ENCODE measurements at regions of chr4 and their contacts with region 1.

Region 1: GRCh38 chr4:71009890-71010588 is 16.6 kb downstream of the DCK start:
- DNase-seq: no peak
- ATAC-seq: peak; percentile 71
- H3K4me3 ChIP-seq: no peak overlapping the region
- H3K27ac ChIP-seq: no peak overlapping the region
- H3K4me1 ChIP-seq: peaks cover 8% of the 10 kb centered on the region
- H3K27me3 ChIP-seq: no peaks in the 10 kb centered on the region
- CTCF ChIP-seq: peak; percentile 47 to 61 (median 54); a peak in 5 of 6 replicates
- EP300 ChIP-seq: no peak
- POLR2A ChIP-seq: no peak
- RAD21 ChIP-seq: peak; percentile 62

Region 2: GRCh38 chr4:70183168-70183939 is 826.7 kb before region 1 on chr4:
- CTCF ChIA-PET with region 1: no interaction called
- POLR2A ChIA-PET with region 1: no interaction called
- RAD21 ChIA-PET with region 1: no interaction called
- SMC1A ChIA-PET with region 1: no interaction called
- in situ Hi-C with region 1: no loop called
- intact Hi-C with region 1: no loop called
- DNase-seq: no peak
- ATAC-seq: peak; percentile 93
- H3K4me3 ChIP-seq: no peak overlapping the region
- H3K27ac ChIP-seq: no peak overlapping the region
- H3K4me1 ChIP-seq: no peaks in the 10 kb centered on the region
- H3K27me3 ChIP-seq: no peaks in the 10 kb centered on the region
- CTCF ChIP-seq: peak; percentile 62 to 74 (median 73)
- EP300 ChIP-seq: no peak
- POLR2A ChIP-seq: no peak
- RAD21 ChIP-seq: peak; percentile 75

Region 3: DNA sequence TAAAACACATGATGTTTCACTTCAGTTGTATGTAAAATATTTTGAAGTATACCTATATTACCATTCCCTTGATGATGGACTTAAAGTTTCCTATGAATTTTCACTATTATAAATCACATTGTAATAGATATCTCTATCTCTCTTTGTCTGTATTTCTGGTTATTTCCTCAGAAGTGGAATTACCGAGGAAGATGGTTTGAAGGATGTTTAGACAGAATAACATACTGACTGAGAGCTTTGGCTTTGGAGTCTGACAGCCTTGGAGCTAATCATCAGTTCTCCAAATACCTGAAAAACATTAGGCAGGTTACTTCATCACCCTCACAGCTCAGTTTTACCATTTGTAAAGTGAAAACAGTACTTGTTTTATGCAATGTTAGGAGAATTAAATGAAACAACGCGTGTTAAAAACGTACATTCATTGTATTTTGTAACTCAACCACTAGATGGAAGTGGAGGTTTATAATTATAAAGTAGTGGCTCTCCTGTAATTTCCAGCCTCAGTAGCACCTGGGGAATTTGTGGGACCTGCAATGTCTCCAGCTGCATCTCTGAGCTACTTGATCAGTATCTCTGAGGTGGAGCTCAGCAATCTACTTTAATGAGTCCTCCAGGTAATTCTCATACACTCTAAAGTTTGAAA is 358.1 kb before region 1 on chr4:
- CTCF ChIA-PET with region 1: interaction called, 22 read pairs
- POLR2A ChIA-PET with region 1: no interaction called
- RAD21 ChIA-PET with region 1: interaction called, 11 read pairs
- SMC1A ChIA-PET with region 1: interaction called, 18 read pairs
- in situ Hi-C with region 1: no loop called
- intact Hi-C with region 1: loop called (anchors 2 kb)
- DNase-seq: no peak
- ATAC-seq: peak; percentile 68
- H3K4me3 ChIP-seq: no peak overlapping the region
- H3K27ac ChIP-seq: no peak overlapping the region
- H3K4me1 ChIP-seq: no peaks in the 10 kb centered on the region
- H3K27me3 ChIP-seq: no peaks in the 10 kb centered on the region
- CTCF ChIP-seq: peak; percentile 20 to 60 (median 52); a peak in 4 of 6 replicates
- EP300 ChIP-seq: no peak
- POLR2A ChIP-seq: no peak
- RAD21 ChIP-seq: peak; percentile 72

Region 4: GRCh38 chr4:70704331-70705145 is 305.5 kb before region 1 on chr4:
- CTCF ChIA-PET with region 1: interaction called, 3 read pairs
- POLR2A ChIA-PET with region 1: no interaction called
- RAD21 ChIA-PET with region 1: interaction called, 6 read pairs
- SMC1A ChIA-PET with region 1: interaction called, 11 read pairs
- in situ Hi-C with region 1: no loop called
- intact Hi-C with region 1: no loop called
- DNase-seq: no peak
- ATAC-seq: peak; percentile 77
- H3K4me3 ChIP-seq: peak overlapping the region; percentile 92
- H3K27ac ChIP-seq: peak overlapping the region; percentile 50
- H3K4me1 ChIP-seq: no peaks in the 10 kb centered on the region; the same call in 1 of the 2 replicates
- H3K27me3 ChIP-seq: no peaks in the 10 kb centered on the region
- CTCF ChIP-seq: peak; percentile 28 to 47 (median 47); a peak in 4 of 6 replicates
- EP300 ChIP-seq: no peak
- POLR2A ChIP-seq: peak; percentile 18; the same call in 1 of the 2 replicates
- RAD21 ChIP-seq: peak; percentile 32; the same call in 1 of the 2 replicates

Region 5: DNA sequence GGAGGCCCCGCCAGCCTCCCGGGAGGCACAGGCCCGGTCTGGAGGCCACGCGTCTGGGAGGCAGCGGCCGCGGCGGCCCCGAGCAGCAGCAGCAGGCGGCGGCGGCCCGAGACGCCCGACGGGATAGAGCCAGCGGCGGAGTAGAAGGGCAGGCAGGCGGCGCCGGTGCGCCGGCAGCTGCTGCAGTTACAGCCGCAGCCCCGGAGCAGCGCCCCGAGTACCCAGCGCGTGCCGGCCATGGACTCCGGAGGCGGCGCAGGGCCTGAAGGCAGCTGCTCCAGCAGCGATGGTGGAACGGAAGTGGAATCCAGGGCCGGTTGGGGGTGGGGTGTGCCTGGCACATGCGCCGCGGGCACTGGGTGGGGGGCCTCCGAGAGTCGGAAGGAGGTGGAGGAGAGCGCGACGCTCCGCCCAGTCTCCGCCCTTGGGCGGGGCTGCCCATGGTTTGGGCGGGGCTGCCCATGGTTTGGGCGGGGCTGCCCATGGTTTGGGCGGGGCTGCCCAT is 170.4 kb before region 1 on chr4 and contains the start of gene GRSF1:
- CTCF ChIA-PET with region 1: interaction called, 4 read pairs
- POLR2A ChIA-PET with region 1: interaction called, 3 read pairs
- RAD21 ChIA-PET with region 1: interaction called, 13 read pairs
- SMC1A ChIA-PET with region 1: interaction called, 11 read pairs
- in situ Hi-C with region 1: no loop called
- intact Hi-C with region 1: loop called (anchors 2 kb)
- DNase-seq: peak; percentile 60
- ATAC-seq: peak; percentile 86
- H3K4me3 ChIP-seq: peak within 1 kb of the TSS; percentile 85
- H3K27ac ChIP-seq: peak within 1 kb of the TSS; percentile 85
- H3K4me1 ChIP-seq: peaks cover 13% of the 10 kb centered on the region
- H3K27me3 ChIP-seq: no peaks in the 10 kb centered on the region
- CTCF ChIP-seq: peak in 1 of 3 experiments; percentile 32; a peak in 2 of 6 replicates
- EP300 ChIP-seq: no peak
- POLR2A ChIP-seq: peak; percentile 88
- RAD21 ChIP-seq: no peak
- polyA plus RNA-seq, gene GRSF1: 37.5 to 59.6 TPM

Region 6: DNA sequence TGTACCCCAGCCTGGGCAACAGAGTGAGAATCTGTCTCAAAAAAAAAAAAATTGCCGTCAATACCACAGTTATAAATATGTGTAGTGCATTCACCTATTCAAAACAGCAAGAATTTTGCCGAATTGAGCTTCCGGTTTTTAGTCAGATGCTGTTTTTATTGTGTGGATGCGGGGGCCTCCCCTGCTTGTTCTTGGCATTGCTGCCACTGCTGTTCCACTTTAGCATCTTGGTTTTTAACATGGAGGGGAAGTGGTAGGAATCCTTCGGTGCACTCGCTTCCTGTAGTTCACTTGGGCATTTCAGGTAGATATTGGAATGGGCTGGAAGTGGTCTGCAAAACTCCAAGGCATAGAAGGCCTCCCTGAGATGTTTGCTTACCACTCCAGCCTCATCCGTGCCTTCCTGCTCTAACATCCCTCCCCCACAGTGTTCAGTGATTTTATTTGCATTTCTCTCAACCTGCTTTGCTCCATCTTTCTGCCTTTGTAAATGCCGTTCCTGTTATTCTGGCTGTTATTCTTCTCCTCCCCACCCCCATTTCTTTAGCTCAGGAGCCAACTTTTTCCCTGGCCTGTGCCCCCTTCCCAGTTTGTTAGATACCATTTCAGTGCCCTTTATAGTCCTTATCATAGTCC is 82.4 kb before region 1 on chr4:
- CTCF ChIA-PET with region 1: interaction called, 6 read pairs
- POLR2A ChIA-PET with region 1: no interaction called
- RAD21 ChIA-PET with region 1: interaction called, 8 read pairs
- SMC1A ChIA-PET with region 1: interaction called, 5 read pairs
- in situ Hi-C with region 1: no loop called
- intact Hi-C with region 1: loop called (anchors 5 kb)
- DNase-seq: no peak
- ATAC-seq: peak; percentile 56
- H3K4me3 ChIP-seq: peak overlapping the region; percentile 43; the same call in 1 of the 2 replicates
- H3K27ac ChIP-seq: peak overlapping the region; percentile 54
- H3K4me1 ChIP-seq: peaks cover 36% of the 10 kb centered on the region
- H3K27me3 ChIP-seq: no peaks in the 10 kb centered on the region
- CTCF ChIP-seq: peak in 2 of 3 experiments; percentile 14 to 35; a peak in 3 of 6 replicates
- EP300 ChIP-seq: no peak
- POLR2A ChIP-seq: no peak
- RAD21 ChIP-seq: peak; percentile 36; the same call in 1 of the 2 replicates

Region 7: GRCh38 chr4:70984589-70984988 is 25.4 kb before region 1 on chr4:
- CTCF ChIA-PET with region 1: interaction called, 17 read pairs
- POLR2A ChIA-PET with region 1: no interaction called
- RAD21 ChIA-PET with region 1: interaction called, 5 read pairs
- SMC1A ChIA-PET with region 1: interaction called, 169 read pairs
- in situ Hi-C with region 1: no loop called
- intact Hi-C with region 1: no loop called
- DNase-seq: no peak
- ATAC-seq: no peak
- H3K4me3 ChIP-seq: no peak overlapping the region
- H3K27ac ChIP-seq: no peak overlapping the region
- H3K4me1 ChIP-seq: no peaks in the 10 kb centered on the region
- H3K27me3 ChIP-seq: no peaks in the 10 kb centered on the region
- CTCF ChIP-seq: no peak; a peak in 1 of 6 replicates
- EP300 ChIP-seq: no peak
- POLR2A ChIP-seq: no peak
- RAD21 ChIP-seq: peak; percentile 20; the same call in 1 of the 2 replicates

Region 8: GRCh38 chr4:71020611-71021010 is 10.6 kb after region 1 on chr4:
- CTCF ChIA-PET with region 1: interaction called, 10 read pairs
- POLR2A ChIA-PET with region 1: interaction called, 3 read pairs
- RAD21 ChIA-PET with region 1: interaction called, 5 read pairs
- SMC1A ChIA-PET with region 1: interaction called, 10 read pairs
- in situ Hi-C with region 1: no loop called
- intact Hi-C with region 1: no loop called
- DNase-seq: no peak
- ATAC-seq: no peak
- H3K4me3 ChIP-seq: no peak overlapping the region
- H3K27ac ChIP-seq: no peak overlapping the region
- H3K4me1 ChIP-seq: no peaks in the 10 kb centered on the region
- H3K27me3 ChIP-seq: no peaks in the 10 kb centered on the region
- CTCF ChIP-seq: no peak
- EP300 ChIP-seq: no peak
- POLR2A ChIP-seq: no peak
- RAD21 ChIP-seq: no peak

Measured in GM12878 (cell line).